ENCODE measurements at regions of chr16 and their contacts with region 1.

Region 1: DNA sequence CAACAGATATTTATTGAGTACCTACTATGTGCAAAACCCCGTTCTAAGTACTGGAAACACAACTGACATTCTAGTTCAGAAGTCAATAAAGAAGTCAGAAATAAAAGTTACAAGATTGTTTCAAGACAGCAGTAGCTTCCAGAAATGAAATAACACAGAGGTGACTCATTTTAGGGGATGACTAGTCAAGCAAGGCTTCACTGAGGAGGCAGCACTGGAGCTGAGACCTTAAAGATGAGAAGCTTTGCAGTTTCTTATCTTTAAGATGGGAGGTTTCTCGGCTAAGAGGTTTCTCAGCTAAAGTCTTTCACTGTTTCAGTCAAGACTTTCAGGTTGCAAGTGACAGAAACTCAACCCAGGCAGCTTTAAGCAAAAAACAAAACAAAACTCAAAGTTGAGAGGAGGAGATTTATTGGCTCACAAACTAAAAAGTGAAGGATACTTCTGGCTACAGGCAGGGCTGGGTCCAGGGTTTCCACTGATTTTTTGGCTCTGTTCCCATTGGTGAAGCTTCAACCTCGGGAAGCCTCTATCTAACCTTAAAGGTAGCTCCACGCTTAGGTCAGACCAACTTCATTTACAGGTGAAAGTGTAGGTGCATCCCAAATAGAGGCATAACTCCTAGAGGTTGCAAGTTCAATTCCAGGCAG is 7.4 kb upstream of the MMP2 start:
- DNase-seq: peak; percentile 51
- H3K4me3 Mint-ChIP-seq: no peak overlapping the region
- H3K27ac Mint-ChIP-seq: peak overlapping the region; percentile 36
- H3K4me1 Mint-ChIP-seq: peaks cover 10% of the 10 kb centered on the region
- H3K27me3 Mint-ChIP-seq: peaks cover 8% of the 10 kb centered on the region

Region 2: DNA sequence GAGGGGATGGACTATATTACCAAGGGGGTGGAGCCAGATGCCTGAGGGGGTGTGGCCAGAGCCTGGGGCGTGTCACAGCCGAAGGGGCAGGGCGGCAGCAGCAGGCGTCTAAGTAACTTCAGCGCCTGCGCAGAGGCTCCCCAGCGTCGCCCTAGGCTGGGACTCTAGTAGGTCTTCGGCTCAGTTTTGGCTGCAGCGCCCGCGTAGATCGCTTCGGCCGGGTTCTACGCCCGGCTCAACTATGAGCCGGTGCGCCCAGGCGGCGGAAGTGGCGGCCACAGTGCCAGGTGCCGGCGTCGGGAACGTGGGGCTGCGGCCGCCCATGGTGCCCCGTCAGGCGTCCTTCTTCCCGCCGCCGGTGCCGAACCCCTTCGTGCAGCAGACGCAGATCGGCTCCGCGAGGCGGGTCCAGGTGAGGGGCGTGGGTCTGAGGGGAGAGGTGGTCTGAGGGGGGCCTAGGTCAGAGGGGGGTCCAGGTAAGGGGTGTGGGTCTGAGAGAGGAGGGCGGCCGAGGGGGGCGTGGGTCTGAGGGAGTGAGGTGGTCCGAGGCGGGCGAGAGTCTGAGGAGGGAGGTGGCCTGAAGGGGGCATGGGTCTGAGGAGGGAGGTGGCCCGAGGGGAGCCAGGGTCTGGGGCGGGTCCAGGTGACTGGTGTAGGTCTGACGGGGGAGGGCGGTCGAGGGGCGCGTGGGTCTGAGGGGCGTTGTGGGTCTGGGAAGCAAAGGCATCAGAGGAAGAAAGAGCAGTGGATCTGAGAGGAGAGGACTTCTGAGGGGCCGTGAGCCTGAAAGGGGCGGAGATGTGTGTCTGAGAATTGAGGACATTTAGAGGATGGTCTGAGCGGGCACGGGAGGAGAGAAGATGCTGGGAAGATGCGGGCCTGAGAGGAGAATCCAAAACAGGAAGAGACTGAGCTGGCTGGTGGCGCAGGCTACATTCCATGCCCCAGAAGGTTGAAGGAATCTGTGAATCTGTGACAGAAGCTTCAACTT is 37.7 kb after region 1 on chr16 and contains the start of gene LPCAT2:
- CTCF ChIA-PET with region 1: no interaction called
- POLR2A ChIA-PET with region 1: no interaction called
- intact Hi-C with region 1: no loop called
- DNase-seq: peak; percentile 52
- H3K4me3 Mint-ChIP-seq: peak within 1 kb of the TSS; percentile 0
- H3K27ac Mint-ChIP-seq: no peak within 1 kb of the TSS
- H3K4me1 Mint-ChIP-seq: peaks cover 5% of the 10 kb centered on the region
- H3K27me3 Mint-ChIP-seq: peaks cover 44% of the 10 kb centered on the region
- total RNA-seq, gene LPCAT2: 0.12 to 0.40 TPM

Region 3: GRCh38 chr16:55756963-55757362 is 285.4 kb after region 1 on chr16:
- CTCF ChIA-PET with region 1: no interaction called
- POLR2A ChIA-PET with region 1: no interaction called
- intact Hi-C with region 1: loop called (anchors 1 kb)
- DNase-seq: no peak
- H3K4me3 Mint-ChIP-seq: no peak overlapping the region
- H3K27ac Mint-ChIP-seq: no peak overlapping the region
- H3K4me1 Mint-ChIP-seq: peaks cover 25% of the 10 kb centered on the region
- H3K27me3 Mint-ChIP-seq: peaks cover 10% of the 10 kb centered on the region

Region 4: GRCh38 chr16:56191156-56191815 is 719.7 kb after region 1 on chr16 and contains the start of gene GNAO1:
- CTCF ChIA-PET with region 1: no interaction called
- POLR2A ChIA-PET with region 1: no interaction called
- intact Hi-C with region 1: loop called (anchors 5 kb)
- DNase-seq: peak; percentile 65
- H3K4me3 Mint-ChIP-seq: peak within 1 kb of the TSS; percentile 69
- H3K27ac Mint-ChIP-seq: no peak within 1 kb of the TSS
- H3K4me1 Mint-ChIP-seq: peaks cover 32% of the 10 kb centered on the region
- H3K27me3 Mint-ChIP-seq: peaks cover 52% of the 10 kb centered on the region
- total RNA-seq, gene GNAO1: 1.3 to 1.4 TPM

Measured in activated CD4-positive, alpha-beta memory T cell treated with anti-CD3 and anti-CD28 coated beads for 36 hours (primary cell).